Activated T-helper 2 cell treated with anti-CD3 and anti-CD28 coated beads, Interferon-gamma antibody, Interleukin-2, Interleukin-4, amounts not matched to agents 10 μg/mL and 5 μg/mL and 100 μg/mL, durations not matched to agents 14 hours and 24 hours and 36 hours (primary cell): ENCODE measurements at regions of chr13 and their contacts with region 1.

Region 1: DNA sequence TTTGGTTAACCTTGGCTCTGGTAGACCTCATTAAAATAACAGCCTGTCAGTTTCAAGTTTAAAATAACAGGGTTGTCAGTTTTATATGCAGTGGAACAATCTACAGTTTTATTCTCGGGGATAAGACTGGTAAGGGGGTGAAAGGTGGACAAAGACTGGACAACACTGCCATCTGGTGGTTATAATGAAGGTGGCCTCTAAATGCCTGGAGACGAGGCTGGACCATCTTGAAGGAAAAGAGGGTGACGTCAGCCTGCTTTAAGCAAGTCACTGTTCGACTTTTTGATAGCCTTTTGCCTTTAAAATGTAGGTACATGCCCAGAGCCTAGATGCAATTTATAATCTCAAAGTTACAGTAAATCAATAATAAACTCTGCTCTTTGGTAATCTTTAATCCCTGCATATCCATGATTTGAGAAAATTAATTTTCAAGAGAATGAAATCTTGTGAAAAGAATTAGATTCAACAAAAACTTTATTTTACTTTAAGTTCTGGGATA is 117.0 kb downstream of the DCT start:
- DNase-seq: peak; percentile 42
- H3K4me3 Mint-ChIP-seq: no peak overlapping the region
- H3K27ac Mint-ChIP-seq: no peak overlapping the region
- H3K4me1 Mint-ChIP-seq: no peaks in the 10 kb centered on the region
- H3K27me3 Mint-ChIP-seq: peaks cover 2% of the 10 kb centered on the region

Region 2: GRCh38 chr13:94192431-94192975 is 170.0 kb before region 1 on chr13:
- intact Hi-C with region 1: loop called (anchors 5 kb)
- DNase-seq: no peak
- H3K4me3 Mint-ChIP-seq: no peak overlapping the region
- H3K27ac Mint-ChIP-seq: no peak overlapping the region
- H3K4me1 Mint-ChIP-seq: no peaks in the 10 kb centered on the region
- H3K27me3 Mint-ChIP-seq: no peaks in the 10 kb centered on the region

Region 3: GRCh38 chr13:94249512-94249911 is 112.9 kb before region 1 on chr13:
- intact Hi-C with region 1: no loop called
- DNase-seq: no peak
- H3K4me3 Mint-ChIP-seq: no peak overlapping the region
- H3K27ac Mint-ChIP-seq: no peak overlapping the region
- H3K4me1 Mint-ChIP-seq: no peaks in the 10 kb centered on the region
- H3K27me3 Mint-ChIP-seq: no peaks in the 10 kb centered on the region